Activated naive CD4-positive, alpha-beta T cell treated with anti-CD3 and anti-CD28 coated beads for 36 hours (primary cell): ENCODE measurements at regions of chr5 and their contacts with region 1.

Region 1: DNA sequence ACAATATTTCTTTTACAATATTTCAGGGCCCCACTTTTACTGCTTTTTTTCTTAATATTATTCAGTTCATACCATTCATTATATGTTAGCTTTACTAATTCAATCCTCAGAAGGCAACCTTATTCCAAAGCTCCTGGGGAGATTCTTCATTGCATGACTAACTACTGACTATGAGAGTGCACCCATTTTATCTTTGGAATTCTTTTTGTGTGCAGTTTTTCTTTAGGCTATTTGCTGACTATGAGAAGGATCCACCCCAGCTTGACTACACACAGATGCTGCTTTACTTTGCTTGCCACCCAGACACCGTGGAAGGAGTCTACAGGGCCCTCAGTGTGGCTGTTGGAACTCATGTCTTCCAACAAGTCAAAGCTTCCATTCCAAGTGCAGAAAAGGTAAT is 56.9 kb upstream of the IL7R start:
- DNase-seq: no peak
- H3K4me3 Mint-ChIP-seq: no peak overlapping the region
- H3K27ac Mint-ChIP-seq: no peak overlapping the region
- H3K4me1 Mint-ChIP-seq: peaks cover 76% of the 10 kb centered on the region
- H3K27me3 Mint-ChIP-seq: no peaks in the 10 kb centered on the region

Region 2: GRCh38 chr5:35815089-35815936 is 15.6 kb after region 1 on chr5:
- CTCF ChIA-PET with region 1: interaction called, 9 read pairs
- intact Hi-C with region 1: loop called (anchors 1 kb)
- DNase-seq: peak; percentile 76
- H3K4me3 Mint-ChIP-seq: no peak overlapping the region
- H3K27ac Mint-ChIP-seq: no peak overlapping the region
- H3K4me1 Mint-ChIP-seq: peaks cover 45% of the 10 kb centered on the region
- H3K27me3 Mint-ChIP-seq: no peaks in the 10 kb centered on the region

Region 3: DNA sequence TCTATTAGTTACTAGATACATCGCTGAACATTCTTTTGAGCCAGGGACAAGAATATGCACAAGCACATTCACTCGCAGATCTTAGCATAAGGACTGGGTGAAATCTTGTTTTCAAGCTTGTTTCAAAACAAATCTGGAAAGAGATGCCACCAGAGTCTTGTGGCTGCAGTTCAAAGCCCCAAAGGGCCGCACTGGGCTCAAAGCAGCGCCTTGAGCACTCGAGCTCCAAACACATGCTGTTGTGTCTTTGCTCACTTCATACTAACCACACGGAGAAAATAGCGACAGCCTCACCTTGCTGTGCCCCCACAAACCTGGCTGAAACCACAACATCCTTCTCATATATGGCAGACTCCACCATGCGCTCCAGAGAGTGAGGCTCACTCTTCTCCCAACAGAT is 22.8 kb after region 1 on chr5:
- CTCF ChIA-PET with region 1: interaction called, 7 read pairs
- intact Hi-C with region 1: loop called (anchors 1 kb)
- DNase-seq: peak; percentile 56
- H3K4me3 Mint-ChIP-seq: peak overlapping the region; percentile 30
- H3K27ac Mint-ChIP-seq: peak overlapping the region; percentile 95
- H3K4me1 Mint-ChIP-seq: peaks cover 87% of the 10 kb centered on the region
- H3K27me3 Mint-ChIP-seq: no peaks in the 10 kb centered on the region

Region 4: DNA sequence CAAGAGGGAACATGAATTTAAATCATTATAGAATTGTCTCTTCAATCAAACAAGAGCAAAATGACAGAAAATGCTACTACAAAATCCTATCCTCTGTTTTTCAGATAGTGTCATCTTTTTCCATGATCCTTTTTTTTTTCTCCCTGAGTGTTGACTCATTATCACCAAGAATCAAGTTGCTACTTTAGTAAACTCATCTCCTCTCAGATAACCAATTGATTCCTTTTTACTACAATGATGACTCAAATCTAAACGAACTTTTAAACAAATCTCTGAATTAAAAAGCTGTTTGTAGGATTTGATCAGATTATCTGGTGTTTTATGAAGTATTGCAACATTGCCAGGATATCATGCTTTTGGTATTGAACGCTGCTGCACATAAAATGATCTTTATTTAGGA is 33.0 kb after region 1 on chr5:
- CTCF ChIA-PET with region 1: interaction called, 7 read pairs
- intact Hi-C with region 1: loop called (anchors 1 kb)
- DNase-seq: no peak
- H3K4me3 Mint-ChIP-seq: no peak overlapping the region
- H3K27ac Mint-ChIP-seq: peak overlapping the region; percentile 95
- H3K4me1 Mint-ChIP-seq: peaks cover 94% of the 10 kb centered on the region
- H3K27me3 Mint-ChIP-seq: no peaks in the 10 kb centered on the region

Region 5: GRCh38 chr5:36125868-36126267 is 326.1 kb after region 1 on chr5:
- CTCF ChIA-PET with region 1: no interaction called
- intact Hi-C with region 1: no loop called
- DNase-seq: no peak
- H3K4me3 Mint-ChIP-seq: no peak overlapping the region
- H3K27ac Mint-ChIP-seq: no peak overlapping the region
- H3K4me1 Mint-ChIP-seq: no peaks in the 10 kb centered on the region
- H3K27me3 Mint-ChIP-seq: no peaks in the 10 kb centered on the region